ENCODE measurements at regions of chr1 and their contacts with region 1.

Region 1: DNA sequence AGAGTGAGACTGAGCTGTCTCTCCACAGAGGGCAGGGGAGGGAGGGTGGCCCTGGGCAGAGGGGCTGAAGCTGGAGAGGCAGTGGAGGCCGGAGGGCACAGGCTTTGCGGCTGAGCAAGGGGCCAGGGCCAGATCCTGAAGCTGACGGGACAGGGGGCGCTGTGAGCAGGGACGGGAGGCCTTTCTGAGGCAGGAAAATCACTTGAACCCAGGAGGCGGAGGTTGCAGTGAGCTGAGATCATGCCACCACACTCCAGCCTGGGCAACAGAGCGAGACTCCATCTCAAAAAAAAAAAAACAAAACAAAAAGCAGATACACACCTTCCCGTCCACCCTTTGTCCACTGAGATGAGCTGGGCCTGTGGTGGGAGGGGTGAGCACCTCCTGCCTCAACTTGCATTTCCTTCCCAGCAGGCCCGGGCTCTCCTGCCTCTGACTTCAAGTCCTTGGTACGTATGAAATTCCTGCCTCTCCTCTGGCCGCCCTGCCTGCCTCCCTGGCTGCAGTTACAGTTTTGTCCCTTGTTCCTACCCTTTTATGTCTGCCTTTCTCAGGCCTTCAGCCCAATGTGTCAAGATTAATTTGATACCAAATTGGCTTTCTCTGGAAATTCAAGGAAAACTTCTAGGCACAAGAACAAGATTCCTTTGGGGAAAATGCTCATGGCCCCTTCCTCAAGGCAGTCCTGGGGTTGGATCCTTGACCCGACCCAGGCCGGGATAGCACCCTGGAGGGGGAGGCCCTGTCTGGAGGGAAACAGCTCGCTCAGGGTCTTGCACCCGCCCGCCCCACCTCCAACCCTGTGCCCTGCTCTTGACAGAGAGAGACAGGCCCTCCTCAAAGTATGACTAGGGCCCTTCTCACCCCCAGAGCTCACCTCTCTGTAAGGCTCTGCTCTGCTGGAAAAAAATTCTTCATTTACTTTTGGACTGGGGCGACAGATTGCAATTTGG is 11.2 kb upstream of the ADAMTSL4 start:
- DNase-seq: no peak
- H3K4me3 ChIP-seq: no peak overlapping the region
- H3K27ac ChIP-seq: peak overlapping the region; percentile 71
- H3K4me1 ChIP-seq: peaks cover 33% of the 10 kb centered on the region
- H3K27me3 ChIP-seq: no peaks in the 10 kb centered on the region
- CTCF ChIP-seq: no peak
- POLR2A ChIP-seq: no peak

Region 2: DNA sequence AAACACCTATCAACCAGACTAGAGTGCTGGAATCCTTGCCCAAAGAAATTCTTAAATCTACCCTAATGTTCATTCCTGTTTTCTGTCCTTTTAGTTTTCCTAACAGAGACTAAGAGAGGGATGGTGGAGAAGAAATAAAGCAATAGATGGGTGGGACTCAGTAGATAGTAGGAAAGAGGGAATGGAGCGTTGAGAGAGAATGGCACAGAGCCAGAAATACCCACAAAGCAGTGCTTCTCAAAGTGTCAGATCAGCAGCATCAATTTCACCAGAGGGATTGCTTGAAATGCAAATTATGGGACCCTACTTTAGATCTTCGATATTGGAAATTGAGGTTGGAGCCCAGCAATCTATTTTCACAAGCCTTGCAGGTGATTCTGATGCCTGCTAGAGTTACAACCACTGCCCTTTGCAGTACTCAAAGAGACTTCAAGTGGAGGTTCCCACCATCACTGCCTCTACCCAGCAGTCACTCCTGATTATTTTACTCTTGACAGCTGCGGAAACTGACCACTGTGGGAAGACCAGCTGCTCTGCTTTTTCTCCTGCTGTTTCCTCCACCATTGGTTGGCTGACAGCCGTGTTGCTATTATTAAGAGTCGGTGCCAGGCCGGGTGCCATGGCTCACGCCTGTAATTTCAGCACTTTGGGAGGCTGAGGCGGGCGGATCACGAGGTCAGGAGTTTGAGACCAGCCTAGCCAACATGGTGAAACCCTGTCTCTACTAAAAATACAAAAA is 228.1 kb before region 1 on chr1:
- intact Hi-C with region 1: no loop called
- DNase-seq: no peak
- H3K4me3 ChIP-seq: no peak overlapping the region
- H3K27ac ChIP-seq: no peak overlapping the region
- H3K4me1 ChIP-seq: no peaks in the 10 kb centered on the region
- H3K27me3 ChIP-seq: no peaks in the 10 kb centered on the region
- CTCF ChIP-seq: no peak
- POLR2A ChIP-seq: no peak

Region 3: DNA sequence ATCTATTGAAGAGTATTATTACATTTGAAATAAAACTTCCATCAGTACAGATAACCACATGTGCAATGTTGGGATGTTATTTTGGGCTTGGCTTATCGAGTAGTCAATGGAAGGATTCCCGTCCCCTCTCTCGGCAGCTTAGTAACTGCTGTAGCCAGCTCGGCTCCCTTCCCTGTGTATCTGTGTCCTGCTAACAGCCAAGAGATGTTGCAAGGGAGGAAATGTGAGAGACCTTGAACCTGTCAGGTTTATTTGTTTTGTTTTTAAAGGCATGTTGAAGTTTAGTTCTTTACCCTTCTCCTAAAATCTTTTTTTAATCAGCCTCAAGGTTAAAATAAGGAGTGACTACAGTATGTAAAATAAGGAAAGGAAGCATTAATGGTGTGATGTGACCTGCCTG is 64.3 kb before region 1 on chr1:
- intact Hi-C with region 1: loop called (anchors 5 kb)
- DNase-seq: no peak
- H3K4me3 ChIP-seq: no peak overlapping the region
- H3K27ac ChIP-seq: no peak overlapping the region
- H3K4me1 ChIP-seq: no peaks in the 10 kb centered on the region
- H3K27me3 ChIP-seq: no peaks in the 10 kb centered on the region
- CTCF ChIP-seq: no peak
- POLR2A ChIP-seq: no peak

Region 4: DNA sequence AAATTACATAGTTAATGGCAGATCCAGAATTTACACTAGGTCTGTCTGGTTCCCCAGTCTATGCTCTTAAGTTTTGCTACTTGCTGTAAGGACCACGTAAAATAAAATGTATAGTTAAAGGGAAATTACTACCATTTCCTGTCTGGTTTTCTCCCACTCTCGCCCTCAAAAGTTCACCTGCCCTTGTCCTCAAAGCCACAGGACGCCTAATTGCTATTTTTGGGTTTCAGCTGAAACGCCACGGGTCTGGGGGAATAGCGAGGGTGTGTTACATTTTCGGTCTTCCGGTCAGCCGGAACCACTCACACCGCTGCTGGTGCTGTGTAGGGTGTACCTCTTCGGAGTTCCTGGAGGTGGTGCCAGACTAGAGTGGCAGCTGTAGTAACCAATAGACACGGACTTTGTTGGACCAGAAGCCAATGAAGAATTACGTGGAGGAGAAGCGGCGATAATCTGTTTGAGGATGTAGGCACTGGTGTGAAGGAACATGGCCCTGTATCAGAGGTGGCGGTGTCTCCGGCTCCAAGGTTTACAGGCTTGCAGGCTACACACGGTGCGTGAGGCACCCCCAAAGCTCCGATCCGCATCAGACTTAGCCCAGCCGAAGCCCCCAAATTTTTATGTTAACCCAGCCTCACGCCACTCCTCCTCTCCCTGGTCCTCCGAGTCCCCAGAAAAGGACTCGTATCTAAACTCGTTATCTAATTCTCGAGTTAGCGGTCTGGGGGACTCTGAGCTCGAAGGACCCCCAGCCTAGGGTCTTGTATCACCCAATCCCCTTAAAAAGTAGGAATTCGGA is 50.8 kb before region 1 on chr1 and contains the start of gene TARS2:
- intact Hi-C with region 1: no loop called
- DNase-seq: peak in 1 of 2 donors; percentile 98
- H3K4me3 ChIP-seq: peak within 1 kb of the TSS; percentile 77 to 81
- H3K27ac ChIP-seq: peak within 1 kb of the TSS; percentile 76
- H3K4me1 ChIP-seq: peaks cover 10% of the 10 kb centered on the region
- H3K27me3 ChIP-seq: no peaks in the 10 kb centered on the region
- CTCF ChIP-seq: peak in 2 of 3 experiments; percentile 31 to 37
- POLR2A ChIP-seq: peak in 1 of 2 donors; percentile 43
- total RNA-seq, gene TARS2: 17.4 TPM

Measured in vagina (tissue), 2 donors.